GM12878 (cell line): ENCODE measurements at regions of chr6 and their contacts with region 1.

Region 1: DNA sequence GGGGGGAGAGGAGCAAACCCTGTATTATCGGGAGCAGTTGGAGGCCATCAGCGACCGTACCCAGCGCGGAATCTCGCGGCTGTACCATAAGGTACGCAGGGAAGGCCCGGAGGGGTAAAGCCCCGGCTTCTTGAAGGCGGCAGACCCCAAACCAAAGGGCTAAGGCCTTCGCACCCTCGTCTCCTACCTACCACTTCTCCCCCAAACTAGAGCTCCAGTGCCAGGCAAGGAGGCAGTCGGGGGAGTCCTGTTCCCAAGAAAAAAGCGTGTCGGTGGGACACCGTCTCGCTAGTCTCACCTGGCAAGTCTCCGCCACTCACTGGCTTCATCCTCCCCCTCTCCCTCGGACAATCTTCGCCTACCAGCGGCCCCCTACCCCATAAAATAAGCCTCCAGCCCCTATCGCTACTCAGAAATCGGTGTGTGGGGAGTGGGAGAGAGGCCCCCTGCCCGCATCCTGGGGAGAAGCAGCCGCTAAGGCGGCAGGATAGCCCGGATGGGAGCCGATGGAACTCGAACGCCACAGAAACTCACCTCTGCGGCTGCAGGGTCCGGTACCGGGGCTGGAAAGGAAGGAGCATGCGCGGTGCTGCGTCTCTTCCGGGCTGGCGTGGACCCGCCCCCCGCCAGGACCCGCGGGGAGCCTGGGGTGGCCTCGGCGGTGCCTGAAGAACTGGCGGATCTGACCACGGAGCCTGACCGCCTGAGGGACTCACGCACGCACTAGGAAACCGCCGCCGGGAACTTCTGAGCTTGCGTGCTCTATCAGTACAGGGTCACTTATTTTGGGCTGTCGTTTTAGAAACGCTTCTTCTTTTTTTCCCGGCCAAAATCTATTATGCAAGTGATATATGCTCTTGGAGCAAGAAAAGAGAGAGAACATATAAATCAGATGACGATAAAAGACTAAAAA is at the start of gene RPS10:
- DNase-seq: peak; percentile 67
- ATAC-seq: peak; percentile 89
- H3K4me3 ChIP-seq: peak within 1 kb of the TSS; percentile 96
- H3K27ac ChIP-seq: peak within 1 kb of the TSS; percentile 96
- H3K4me1 ChIP-seq: peaks cover 6% of the 10 kb centered on the region; the same call in 1 of the 2 replicates
- H3K27me3 ChIP-seq: no peaks in the 10 kb centered on the region
- CTCF ChIP-seq: no peak
- EP300 ChIP-seq: peak; percentile 24 to 54; a peak in 1 of 4 replicates
- POLR2A ChIP-seq: peak; percentile 95
- RAD21 ChIP-seq: no peak
- polyA plus RNA-seq, gene RPS10: 2,067 to 2,394 TPM

Region 2: DNA sequence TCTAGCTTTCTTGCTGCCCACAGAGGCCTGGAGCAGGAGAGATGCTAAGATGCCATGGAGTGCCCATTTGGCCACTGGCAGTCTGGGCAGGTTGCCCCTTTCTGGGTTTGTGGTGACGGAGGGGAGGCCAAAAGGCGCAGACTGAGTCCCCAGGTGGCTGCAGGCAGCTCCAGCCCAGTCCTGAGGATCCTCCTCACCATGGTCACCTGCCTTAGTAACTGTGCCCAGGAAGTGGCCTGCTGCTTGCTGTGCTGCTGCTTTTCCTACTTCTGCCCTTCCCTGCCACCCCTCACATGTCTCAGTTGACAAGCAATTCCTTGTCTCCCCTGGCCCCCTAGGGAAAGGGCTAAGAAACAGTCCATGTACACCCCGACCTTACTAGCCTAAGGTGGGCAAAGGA is 1069.5 kb before region 1 on chr6:
- CTCF ChIA-PET with region 1: no interaction called
- POLR2A ChIA-PET with region 1: no interaction called
- RAD21 ChIA-PET with region 1: no interaction called
- SMC1A ChIA-PET with region 1: no interaction called
- in situ Hi-C with region 1: no loop called
- intact Hi-C with region 1: no loop called
- DNase-seq: no peak
- ATAC-seq: no peak
- H3K4me3 ChIP-seq: no peak overlapping the region
- H3K27ac ChIP-seq: no peak overlapping the region
- H3K4me1 ChIP-seq: no peaks in the 10 kb centered on the region
- H3K27me3 ChIP-seq: no peaks in the 10 kb centered on the region
- CTCF ChIP-seq: no peak
- EP300 ChIP-seq: no peak
- POLR2A ChIP-seq: no peak
- RAD21 ChIP-seq: no peak

Region 3: DNA sequence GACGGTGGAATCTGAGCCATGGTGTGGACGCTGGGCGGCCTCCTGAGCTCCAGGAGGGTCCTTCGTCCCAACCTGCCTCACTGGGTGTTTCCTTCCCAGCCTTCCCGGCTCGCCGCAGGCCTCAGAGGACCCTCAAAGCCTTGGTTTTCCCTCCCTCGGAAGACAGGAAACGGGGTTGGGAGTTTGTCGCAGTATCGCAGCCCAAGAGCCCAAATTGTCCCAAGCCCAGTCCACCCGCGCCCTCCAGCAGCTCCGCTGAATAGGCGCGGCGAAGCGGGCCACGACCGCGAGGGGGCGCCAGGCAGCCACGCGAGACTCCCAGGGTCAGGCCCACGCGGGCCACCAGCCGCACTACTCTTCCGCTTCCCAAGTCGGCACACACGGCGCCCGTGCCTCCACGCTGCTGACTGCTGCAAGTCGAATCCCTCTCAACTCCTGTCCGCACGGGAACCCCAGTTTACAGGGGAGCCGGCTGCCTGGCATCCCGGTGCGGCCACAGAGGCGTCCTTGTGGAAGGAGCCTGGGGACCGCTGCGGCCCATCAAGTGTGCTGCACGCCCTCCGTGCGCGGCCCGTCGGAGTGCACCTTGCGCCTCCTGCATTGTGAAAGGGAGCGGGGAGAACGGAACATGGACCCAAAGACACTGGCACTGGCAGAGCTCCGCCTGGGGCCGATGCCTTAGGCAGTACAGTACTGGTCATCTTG is 229.5 kb before region 1 on chr6:
- CTCF ChIA-PET with region 1: interaction called, 14 read pairs
- POLR2A ChIA-PET with region 1: interaction called, 4 read pairs
- RAD21 ChIA-PET with region 1: no interaction called
- SMC1A ChIA-PET with region 1: interaction called, 3 read pairs
- in situ Hi-C with region 1: no loop called
- intact Hi-C with region 1: no loop called
- DNase-seq: peak; percentile 28
- ATAC-seq: peak; percentile 99
- H3K4me3 ChIP-seq: peak overlapping the region; percentile 64
- H3K27ac ChIP-seq: no peak overlapping the region
- H3K4me1 ChIP-seq: peaks cover 8% of the 10 kb centered on the region
- H3K27me3 ChIP-seq: peaks cover 0 to 2% of the 10 kb centered on the region in 2 experiments; a peak in 1 of 4 replicates
- CTCF ChIP-seq: peak; percentile 94 to 98 (median 96)
- EP300 ChIP-seq: 0 out of 4 replicates have a peak, but pooled peaks of 1 of the 2 experiments have one; percentile 42
- POLR2A ChIP-seq: peak; percentile 77
- RAD21 ChIP-seq: peak; percentile 86